Head of caudate nucleus (tissue), 42 donors: ENCODE measurements at regions of chr1 and their contacts with region 1.

Region 1: GRCh38 chr1:116418091-116418830 is 45.2 kb downstream of the ATP1A1 start:
- DNase-seq: peak; percentile 56 to 93 (median 86)

Region 2: GRCh38 chr1:116372587-116373444 is 45.4 kb before region 1 on chr1 and contains the start of gene ATP1A1:
- intact Hi-C with region 1: loop called (anchors 2 kb)
- DNase-seq: peak; percentile 96 to 100 (median 98)

Region 3: DNA sequence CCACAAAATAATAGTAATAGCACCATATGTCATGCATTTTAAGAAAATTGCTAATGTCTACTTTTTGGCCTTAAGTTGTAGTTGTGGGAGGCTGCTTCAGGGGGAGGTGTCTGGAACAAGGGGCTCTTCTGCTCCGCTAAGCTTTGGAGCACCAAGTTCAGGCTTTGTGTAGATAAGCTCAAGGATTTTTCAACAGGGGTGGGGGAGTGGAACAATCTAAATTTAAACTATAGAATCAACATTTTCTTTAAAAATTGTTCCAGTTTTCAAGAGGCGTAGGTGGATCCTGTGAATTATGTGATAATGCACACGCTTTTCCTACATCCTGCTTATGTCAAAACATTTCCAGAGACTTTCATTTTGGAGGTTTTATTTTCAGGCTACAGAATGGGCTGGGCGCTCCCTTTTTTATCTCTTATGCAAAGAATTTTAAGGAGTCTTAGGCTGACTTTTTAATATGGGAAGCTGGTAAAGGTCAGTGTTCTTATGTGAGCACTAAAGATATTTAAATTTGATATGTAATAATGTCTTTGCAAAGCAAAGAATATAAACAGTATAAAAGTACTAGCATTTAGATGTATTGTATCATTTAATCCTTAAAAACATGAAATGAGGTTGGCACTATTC is 35.3 kb before region 1 on chr1:
- intact Hi-C with region 1: no loop called
- DNase-seq: peak in 3 of 42 donors; percentile 31 to 59 (median 43)